ENCODE measurements at regions of chr5 and their contacts with region 1.

Region 1: GRCh38 chr5:74640450-74640953 is at the start of gene ENC1:
- DNase-seq: peak; percentile 72
- H3K4me3 Mint-ChIP-seq: peak within 1 kb of the TSS; percentile 86
- H3K27ac Mint-ChIP-seq: peak within 1 kb of the TSS; percentile 64
- H3K4me1 Mint-ChIP-seq: peaks cover 49% of the 10 kb centered on the region
- H3K27me3 Mint-ChIP-seq: peaks cover 39% of the 10 kb centered on the region
- total RNA-seq, gene ENC1: 2.7 and 3.2 TPM in 2 replicates

Region 2: GRCh38 chr5:74056789-74057164 is 583.7 kb before region 1 on chr5:
- intact Hi-C with region 1: loop called (anchors 10 kb)
- DNase-seq: no peak
- H3K4me3 Mint-ChIP-seq: no peak overlapping the region
- H3K27ac Mint-ChIP-seq: no peak overlapping the region
- H3K4me1 Mint-ChIP-seq: no peaks in the 10 kb centered on the region
- H3K27me3 Mint-ChIP-seq: peaks cover 10% of the 10 kb centered on the region

Region 3: GRCh38 chr5:74240786-74241750 is 399.4 kb before region 1 on chr5:
- intact Hi-C with region 1: loop called (anchors 1 kb)
- DNase-seq: no peak
- H3K4me3 Mint-ChIP-seq: no peak overlapping the region
- H3K27ac Mint-ChIP-seq: no peak overlapping the region
- H3K4me1 Mint-ChIP-seq: no peaks in the 10 kb centered on the region
- H3K27me3 Mint-ChIP-seq: no peaks in the 10 kb centered on the region

Region 4: DNA sequence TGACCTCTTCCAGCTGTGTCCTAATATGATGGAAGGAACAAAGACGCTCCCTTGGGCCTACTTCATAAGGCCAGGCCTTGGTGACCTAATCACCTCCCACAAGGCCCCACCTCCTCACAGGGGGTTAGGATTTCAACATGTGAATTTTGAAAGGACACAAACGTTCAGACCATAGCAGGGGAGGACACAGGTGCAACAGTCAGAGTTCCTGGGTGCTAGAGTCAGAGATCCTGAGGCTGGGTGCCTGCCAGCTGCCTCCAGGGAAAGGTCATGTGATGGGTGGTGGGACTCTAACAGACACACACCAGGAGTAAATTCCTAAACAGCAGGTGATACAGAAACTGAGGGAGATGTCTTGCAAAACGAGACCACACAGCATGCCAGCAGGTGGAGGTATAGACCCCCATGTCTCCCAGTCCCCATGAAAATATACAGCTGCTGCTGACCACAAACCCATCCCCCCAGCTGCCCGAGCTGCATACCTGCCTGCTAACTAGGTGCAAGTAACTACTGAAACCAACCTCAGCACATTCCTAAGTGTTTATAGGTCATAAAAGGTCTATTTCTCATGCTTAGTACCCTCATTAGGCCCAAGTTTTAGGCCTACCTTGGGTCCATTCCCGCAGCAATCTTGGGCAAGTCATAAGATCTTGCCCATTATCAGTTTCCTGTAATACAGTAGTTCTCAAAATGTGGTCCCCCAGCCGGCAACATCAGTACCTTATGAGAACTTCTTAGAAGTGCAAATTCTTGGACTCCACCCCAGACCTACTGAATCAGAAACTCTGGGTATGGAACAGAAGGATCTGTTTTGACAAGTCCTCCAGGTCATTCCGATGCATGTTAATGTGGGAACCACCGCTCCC is 245.4 kb before region 1 on chr5:
- intact Hi-C with region 1: loop called (anchors 10 kb)
- DNase-seq: no peak
- H3K4me3 Mint-ChIP-seq: no peak overlapping the region
- H3K27ac Mint-ChIP-seq: no peak overlapping the region
- H3K4me1 Mint-ChIP-seq: peaks cover 7% of the 10 kb centered on the region
- H3K27me3 Mint-ChIP-seq: peaks cover under 1% of the 10 kb centered on the region

Region 5: GRCh38 chr5:74476046-74476818 is 164.3 kb before region 1 on chr5:
- intact Hi-C with region 1: loop called (anchors 10 kb)
- DNase-seq: no peak
- H3K4me3 Mint-ChIP-seq: no peak overlapping the region
- H3K27ac Mint-ChIP-seq: no peak overlapping the region
- H3K4me1 Mint-ChIP-seq: no peaks in the 10 kb centered on the region
- H3K27me3 Mint-ChIP-seq: peaks cover 8% of the 10 kb centered on the region

Region 6: GRCh38 chr5:74598731-74599130 is 41.8 kb before region 1 on chr5:
- intact Hi-C with region 1: no loop called
- DNase-seq: no peak
- H3K4me3 Mint-ChIP-seq: no peak overlapping the region
- H3K27ac Mint-ChIP-seq: no peak overlapping the region
- H3K4me1 Mint-ChIP-seq: no peaks in the 10 kb centered on the region
- H3K27me3 Mint-ChIP-seq: peaks cover 25% of the 10 kb centered on the region

Region 7: DNA sequence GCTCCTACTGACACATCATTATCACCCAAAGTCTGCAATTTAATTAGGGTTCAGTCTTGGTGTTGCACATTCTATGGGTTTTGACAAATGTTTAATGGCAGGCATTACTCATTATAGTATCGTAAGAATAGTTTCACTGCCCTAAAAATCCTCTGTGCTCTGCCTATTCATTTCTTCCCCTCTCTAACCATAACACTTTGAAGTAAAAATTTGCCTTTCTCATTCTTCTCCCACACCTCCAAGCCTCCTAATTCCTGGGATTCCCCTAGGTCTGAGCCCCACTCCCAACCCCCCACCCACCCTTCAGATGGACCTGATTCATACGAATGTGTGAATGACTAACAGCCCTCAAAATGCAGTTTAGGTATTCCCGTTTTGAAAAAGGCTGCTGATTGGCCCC is 18.4 kb before region 1 on chr5:
- intact Hi-C with region 1: loop called (anchors 1 kb)
- DNase-seq: no peak
- H3K4me3 Mint-ChIP-seq: no peak overlapping the region
- H3K27ac Mint-ChIP-seq: no peak overlapping the region
- H3K4me1 Mint-ChIP-seq: peaks cover 12% of the 10 kb centered on the region
- H3K27me3 Mint-ChIP-seq: peaks cover 29% of the 10 kb centered on the region

Region 8: DNA sequence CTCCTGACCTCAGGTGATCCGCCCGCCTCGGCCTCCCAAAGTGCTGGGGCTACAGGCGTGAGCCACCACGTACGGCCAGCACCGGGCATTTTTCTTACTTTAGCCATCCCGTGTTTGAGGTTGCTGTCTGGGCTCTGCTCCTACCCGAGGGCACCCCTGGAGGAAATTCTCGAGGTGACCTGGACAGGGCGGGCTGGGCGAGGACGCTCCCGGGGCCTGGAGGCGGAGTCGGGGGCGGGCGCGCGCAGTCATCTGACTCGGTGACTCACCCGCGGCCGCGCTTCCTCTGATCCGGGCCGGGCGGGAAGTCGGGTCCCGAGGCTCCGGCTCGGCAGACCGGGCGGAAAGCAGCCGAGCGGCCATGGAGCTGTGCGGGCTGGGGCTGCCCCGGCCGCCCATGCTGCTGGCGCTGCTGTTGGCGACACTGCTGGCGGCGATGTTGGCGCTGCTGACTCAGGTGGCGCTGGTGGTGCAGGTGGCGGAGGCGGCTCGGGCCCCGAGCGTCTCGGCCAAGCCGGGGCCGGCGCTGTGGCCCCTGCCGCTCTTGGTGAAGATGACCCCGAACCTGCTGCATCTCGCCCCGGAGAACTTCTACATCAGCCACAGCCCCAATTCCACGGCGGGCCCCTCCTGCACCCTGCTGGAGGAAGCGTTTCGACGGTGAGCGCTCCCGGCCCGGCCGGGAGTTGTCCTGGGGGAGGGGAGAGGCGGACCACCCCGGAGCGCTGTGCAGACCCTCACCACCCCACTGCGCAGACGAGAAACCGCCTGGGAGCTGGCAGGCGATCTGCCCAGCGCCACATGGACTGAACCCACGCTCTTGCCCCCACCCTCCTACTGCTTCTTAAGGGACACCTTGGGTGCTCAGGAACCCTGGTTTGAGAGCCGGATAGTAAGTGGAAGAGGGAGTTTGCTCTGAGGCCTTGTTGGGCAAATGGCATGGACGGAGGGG is 44.7 kb after region 1 on chr5 and contains the start of gene HEXB:
- intact Hi-C with region 1: loop called (anchors 2 kb)
- DNase-seq: peak; percentile 83
- H3K4me3 Mint-ChIP-seq: peak within 1 kb of the TSS; percentile 90
- H3K27ac Mint-ChIP-seq: peak within 1 kb of the TSS; percentile 71
- H3K4me1 Mint-ChIP-seq: peaks cover 23% of the 10 kb centered on the region
- H3K27me3 Mint-ChIP-seq: peaks cover 14% of the 10 kb centered on the region
- total RNA-seq, gene HEXB: 62.7 and 71.4 TPM in 2 replicates